ENCODE measurements at regions of chr1 and their contacts with region 1.

Region 1: DNA sequence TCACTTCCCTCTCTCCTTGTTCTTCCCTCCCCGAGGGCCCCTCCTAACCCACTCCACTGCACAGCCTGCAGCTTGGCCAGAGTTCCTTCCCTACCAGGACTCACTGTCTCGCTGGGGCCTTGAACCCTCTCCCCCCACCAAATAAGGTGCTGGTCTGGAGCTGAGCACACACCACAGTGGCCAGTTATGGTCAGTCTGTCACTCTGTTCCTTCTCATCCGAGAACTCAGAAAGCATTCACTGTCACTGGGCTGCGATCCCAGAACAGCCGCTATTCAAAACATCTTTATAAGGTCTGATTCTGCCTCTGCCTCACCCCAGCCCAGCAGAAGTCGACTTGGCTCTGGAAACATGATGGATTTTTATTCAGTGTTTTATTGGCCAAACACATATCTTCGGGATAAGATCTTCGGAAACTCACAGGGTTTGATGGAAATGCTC is 19.8 kb upstream of the LBR start:
- DNase-seq: no peak
- H3K4me3 ChIP-seq: no peak overlapping the region
- H3K27ac ChIP-seq: peak overlapping the region; percentile 95
- H3K4me1 ChIP-seq: peaks cover 80% of the 10 kb centered on the region
- H3K27me3 ChIP-seq: no peaks in the 10 kb centered on the region
- CTCF ChIP-seq: no peak

Region 2: DNA sequence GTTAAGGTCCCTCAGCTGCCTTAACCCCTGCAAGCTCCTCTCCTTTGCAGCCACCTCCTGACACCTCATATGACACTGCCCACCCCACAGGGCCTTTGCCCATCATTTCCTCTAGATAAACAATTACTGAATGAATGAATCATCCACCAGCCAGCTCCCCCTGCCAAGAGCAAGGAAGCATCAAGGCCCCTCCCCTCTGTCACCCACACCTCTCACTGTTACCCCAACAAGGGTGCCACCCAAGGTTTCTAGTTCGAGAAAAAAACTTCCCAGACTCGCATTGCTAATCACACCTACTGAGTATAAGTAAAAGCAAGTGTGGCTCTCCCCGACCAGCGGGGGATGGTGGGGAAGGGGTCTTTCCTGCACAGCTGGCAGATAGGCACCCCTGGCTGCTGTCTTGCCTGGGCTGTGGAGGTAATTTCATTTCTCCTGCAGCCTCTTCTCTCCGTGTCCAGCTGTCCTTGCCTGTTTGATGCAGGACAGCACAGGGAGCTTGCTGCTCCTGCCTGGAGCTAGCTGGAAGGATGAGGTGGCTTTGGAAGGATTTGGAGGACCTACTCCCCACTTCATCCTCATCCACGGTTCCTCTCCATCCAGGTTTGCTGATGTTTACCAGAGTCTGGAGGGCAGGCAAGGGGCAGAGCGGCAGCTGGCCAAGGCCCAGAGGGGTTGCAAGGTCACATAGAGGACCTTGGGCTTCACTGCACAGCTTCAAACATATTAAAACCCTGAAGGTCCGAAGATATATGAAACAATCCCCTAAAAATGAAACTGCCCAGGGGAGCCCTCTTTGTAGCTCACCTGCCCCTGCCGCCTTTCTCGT is 13.3 kb after region 1 on chr1:
- CTCF ChIA-PET with region 1: interaction called, 5 read pairs
- POLR2A ChIA-PET with region 1: interaction called, 5 read pairs
- intact Hi-C with region 1: loop called (anchors 1 kb)
- DNase-seq: peak; percentile 76 to 81
- H3K4me3 ChIP-seq: no peak overlapping the region
- H3K27ac ChIP-seq: peak overlapping the region; percentile 68
- H3K4me1 ChIP-seq: peaks cover 62% of the 10 kb centered on the region
- H3K27me3 ChIP-seq: no peaks in the 10 kb centered on the region
- CTCF ChIP-seq: no peak

Region 3: GRCh38 chr1:225467193-225468020 is 19.7 kb after region 1 on chr1:
- CTCF ChIA-PET with region 1: interaction called, 5 read pairs
- POLR2A ChIA-PET with region 1: interaction called, 3 read pairs
- intact Hi-C with region 1: loop called (anchors 1 kb)
- DNase-seq: no peak
- H3K4me3 ChIP-seq: no peak overlapping the region
- H3K27ac ChIP-seq: no peak overlapping the region
- H3K4me1 ChIP-seq: peaks cover 42% of the 10 kb centered on the region
- H3K27me3 ChIP-seq: no peaks in the 10 kb centered on the region
- CTCF ChIP-seq: no peak

Region 4: DNA sequence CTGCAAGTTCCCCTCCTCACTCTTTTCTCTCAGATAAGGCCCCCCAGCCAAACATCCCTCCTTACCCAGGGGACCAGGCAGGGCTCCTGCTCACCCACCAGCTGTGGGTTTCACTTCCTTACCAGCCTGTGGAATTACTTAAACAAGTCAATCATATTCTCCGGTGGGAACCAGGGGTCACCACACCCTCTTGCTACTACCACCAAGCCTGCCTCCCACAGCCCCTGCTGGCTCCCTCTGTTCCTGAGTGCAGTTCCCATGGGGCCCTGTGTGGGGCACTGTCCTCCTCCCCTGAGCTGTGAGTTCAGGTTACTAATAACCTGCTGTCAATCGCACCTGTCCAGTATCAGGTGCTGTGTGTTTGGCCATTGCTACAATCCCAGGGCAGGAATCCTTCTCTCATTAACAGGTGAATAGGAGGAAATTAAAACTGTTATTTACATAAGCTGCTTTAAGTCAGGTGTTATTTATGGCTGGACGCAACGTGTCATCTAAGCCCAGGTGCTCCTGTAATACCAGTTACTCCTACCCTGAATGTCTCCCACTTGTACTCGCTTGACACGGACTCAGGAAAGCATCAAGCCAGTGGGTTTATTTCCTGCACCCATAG is 33.3 kb after region 1 on chr1:
- CTCF ChIA-PET with region 1: no interaction called
- POLR2A ChIA-PET with region 1: interaction called, 28 read pairs
- intact Hi-C with region 1: no loop called
- DNase-seq: peak; percentile 59 to 81
- H3K4me3 ChIP-seq: no peak overlapping the region
- H3K27ac ChIP-seq: no peak overlapping the region
- H3K4me1 ChIP-seq: no peaks in the 10 kb centered on the region
- H3K27me3 ChIP-seq: no peaks in the 10 kb centered on the region
- CTCF ChIP-seq: peak; percentile 94

Region 5: DNA sequence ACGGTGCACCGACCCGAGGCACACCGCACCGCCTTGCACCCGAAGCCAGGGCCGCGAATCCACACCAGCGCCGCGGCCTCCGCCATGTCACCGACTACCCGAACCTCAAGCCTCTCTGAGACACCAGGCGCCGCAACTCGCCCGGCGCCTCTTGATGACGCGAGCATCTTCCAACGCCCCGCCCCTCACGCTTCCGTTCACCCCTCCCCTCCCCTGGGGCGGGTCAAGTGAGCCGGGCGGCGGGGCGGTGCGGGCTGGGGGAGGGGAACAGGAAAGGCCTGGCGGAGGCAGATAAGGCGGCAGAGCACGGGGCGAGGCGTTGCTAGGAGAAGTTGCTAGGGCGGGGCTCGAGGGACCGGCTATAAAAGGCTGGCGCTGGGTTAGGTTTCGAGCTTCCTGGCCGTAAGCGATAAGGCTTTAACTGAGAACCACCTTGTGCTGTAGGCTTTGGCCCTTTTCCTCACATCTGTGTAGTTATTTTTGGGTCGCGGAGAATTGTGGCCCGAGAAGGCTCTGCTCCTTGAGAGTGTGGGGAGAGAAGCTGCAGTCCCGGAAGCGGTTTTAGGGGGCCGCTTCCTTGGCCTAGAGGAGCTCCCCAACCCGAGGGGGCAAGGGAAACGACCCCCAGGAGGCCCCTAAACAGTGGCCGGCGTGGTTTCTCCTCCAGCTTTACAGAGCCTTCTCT is 551.7 kb after region 1 on chr1 and contains the start of gene SDE2:
- CTCF ChIA-PET with region 1: interaction called, 12 read pairs
- POLR2A ChIA-PET with region 1: no interaction called
- intact Hi-C with region 1: no loop called
- DNase-seq: peak; percentile 92 to 100
- H3K4me3 ChIP-seq: peak within 1 kb of the TSS; percentile 79
- H3K27ac ChIP-seq: peak within 1 kb of the TSS; percentile 67
- H3K4me1 ChIP-seq: peaks cover 27% of the 10 kb centered on the region
- H3K27me3 ChIP-seq: no peaks in the 10 kb centered on the region
- CTCF ChIP-seq: no peak
- total RNA-seq, gene SDE2: 16.0 and 17.3 TPM in 2 replicates